ENCODE measurements at regions of chr2 and their contacts with region 1.

Region 1: DNA sequence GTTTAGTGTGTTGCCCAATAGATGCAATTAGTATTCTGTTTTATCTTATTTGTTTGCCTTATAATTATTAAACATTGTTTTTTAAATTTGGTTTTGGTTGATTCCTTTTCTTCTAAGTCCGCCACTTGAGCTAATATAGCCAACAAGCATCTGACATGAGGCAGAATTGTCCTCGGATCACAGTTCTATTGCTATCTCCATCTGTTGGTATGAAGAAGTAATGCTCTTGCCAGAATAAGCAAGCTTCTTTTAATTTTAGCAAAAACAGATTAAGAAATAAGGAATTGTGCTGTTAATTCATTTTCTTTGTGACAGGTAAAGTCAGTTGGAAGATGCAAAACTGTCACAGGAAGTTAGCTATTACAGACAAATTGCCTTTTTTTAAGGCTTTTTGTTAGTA is 54.3 kb downstream of the R3HDM1 start:
- DNase-seq: peak; percentile 44

Region 2: GRCh38 chr2:135258193-135258592 is 327.4 kb before region 1 on chr2:
- in situ Hi-C with region 1: no loop called
- DNase-seq: no peak

Region 3: GRCh38 chr2:135473567-135473966 is 112.0 kb before region 1 on chr2:
- in situ Hi-C with region 1: loop called (anchors 25 kb)
- DNase-seq: no peak

Region 4: GRCh38 chr2:135638825-135639224 is 53.2 kb after region 1 on chr2:
- in situ Hi-C with region 1: no loop called
- DNase-seq: no peak